Panc1 (cell line): ENCODE measurements at regions of chr22 and their contacts with region 1.

Region 1: DNA sequence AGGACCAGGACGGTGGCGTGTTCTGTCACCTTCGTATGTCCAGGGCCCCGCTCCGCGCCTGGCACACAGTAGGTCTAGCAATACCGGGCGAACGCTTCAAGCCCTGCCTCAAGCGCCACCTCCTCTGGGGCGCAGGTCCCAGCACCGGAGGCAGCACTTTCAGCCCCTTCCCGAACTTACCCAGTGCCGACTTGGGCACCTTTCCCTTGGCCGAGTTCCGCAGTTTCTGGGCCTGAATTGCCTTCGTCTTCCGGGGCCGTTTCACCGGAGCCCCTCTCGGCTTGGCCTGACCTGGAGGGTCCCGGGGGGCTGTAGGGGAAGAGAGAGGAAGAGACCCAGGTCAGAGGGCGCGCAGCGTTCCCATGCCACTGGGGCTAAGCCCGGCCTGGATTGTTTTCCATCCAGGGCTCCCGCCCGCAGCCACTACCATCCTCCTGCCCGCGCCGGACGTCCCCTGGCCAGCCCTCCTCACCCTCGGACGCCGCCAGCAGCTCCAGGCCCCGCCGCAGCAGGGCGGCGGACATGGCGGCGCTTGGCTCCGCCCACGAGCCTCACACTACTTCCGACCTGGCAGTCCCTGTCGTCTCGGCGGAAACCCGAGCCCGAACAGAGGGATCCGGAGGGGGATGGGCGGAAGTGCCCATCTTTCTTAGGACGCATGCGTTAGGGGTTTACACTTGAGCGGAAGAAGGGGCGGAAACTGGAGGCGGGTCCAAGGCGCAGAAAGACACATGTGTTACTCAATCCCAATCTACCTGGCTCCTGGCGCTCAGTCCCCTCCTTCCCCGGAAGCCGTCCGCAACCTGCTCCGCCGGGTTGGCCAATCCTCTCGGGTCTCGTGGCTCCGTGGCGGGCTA is at the start of gene RPS19BP1:
- DNase-seq: peak; percentile 97
- ATAC-seq: peak; percentile 89
- H3K4me3 ChIP-seq: peak within 1 kb of the TSS; percentile 93 to 94
- H3K27ac ChIP-seq: peak within 1 kb of the TSS; percentile 93
- H3K4me1 ChIP-seq: peaks cover 49% of the 10 kb centered on the region
- H3K27me3 ChIP-seq: no peaks in the 10 kb centered on the region
- CTCF ChIP-seq: no peak
- total RNA-seq, gene RPS19BP1: 123 TPM

Region 2: GRCh38 chr22:39152511-39153219 is 379.8 kb before region 1 on chr22 and contains the start of gene CBX7:
- CTCF ChIA-PET with region 1: no interaction called
- POLR2A ChIA-PET with region 1: no interaction called
- in situ Hi-C with region 1: no loop called
- intact Hi-C with region 1: no loop called
- DNase-seq: no peak
- ATAC-seq: peak; percentile 95
- H3K4me3 ChIP-seq: peak within 1 kb of the TSS; percentile 53 to 64
- H3K27ac ChIP-seq: peak within 1 kb of the TSS; percentile 76
- H3K4me1 ChIP-seq: peaks cover 19% of the 10 kb centered on the region
- H3K27me3 ChIP-seq: no peaks in the 10 kb centered on the region
- CTCF ChIP-seq: no peak
- total RNA-seq, gene CBX7: 14.5 TPM

Region 3: DNA sequence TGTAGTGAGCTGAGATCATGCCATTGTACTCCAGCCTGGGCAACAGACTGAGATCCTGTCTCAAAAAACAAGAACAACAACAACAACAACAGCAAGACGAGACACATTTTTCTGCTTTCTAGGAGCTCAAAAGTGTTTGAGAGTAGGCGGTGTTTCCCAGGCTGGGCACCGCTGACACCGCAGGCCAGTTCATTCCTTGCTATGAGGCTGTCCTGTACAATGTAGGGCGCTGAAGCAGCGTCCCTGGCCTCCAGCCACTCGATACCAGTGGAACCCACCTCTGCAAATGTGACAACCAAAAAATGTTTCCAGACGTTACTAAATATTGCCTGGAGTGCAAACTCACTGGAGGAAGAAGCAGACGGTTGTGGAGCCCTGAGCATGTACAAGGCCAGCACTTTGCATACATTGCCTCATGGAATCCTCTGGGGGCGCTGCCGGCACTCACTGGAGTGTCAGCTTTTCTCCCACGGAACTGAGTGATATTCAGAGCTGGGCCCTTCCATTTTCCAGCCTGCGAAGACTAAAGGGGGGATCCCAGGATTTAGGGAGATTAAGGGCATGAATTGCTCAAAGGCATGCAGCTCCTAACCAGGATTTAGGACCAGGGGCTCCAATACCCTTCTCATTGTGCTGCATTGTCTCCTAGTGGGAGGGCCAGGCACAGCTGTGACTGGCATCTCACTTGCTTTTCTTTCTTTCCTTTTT is 36.2 kb before region 1 on chr22:
- CTCF ChIA-PET with region 1: interaction called, 13 read pairs
- POLR2A ChIA-PET with region 1: no interaction called
- in situ Hi-C with region 1: no loop called
- intact Hi-C with region 1: loop called (anchors 5 kb)
- DNase-seq: no peak
- ATAC-seq: peak; percentile 84
- H3K4me3 ChIP-seq: no peak overlapping the region
- H3K27ac ChIP-seq: no peak overlapping the region
- H3K4me1 ChIP-seq: peaks cover 5% of the 10 kb centered on the region
- H3K27me3 ChIP-seq: no peaks in the 10 kb centered on the region
- CTCF ChIP-seq: peak; percentile 85

Region 4: GRCh38 chr22:40036591-40037225 is 504.3 kb after region 1 on chr22:
- CTCF ChIA-PET with region 1: interaction called, 3 read pairs
- POLR2A ChIA-PET with region 1: no interaction called
- in situ Hi-C with region 1: no loop called
- intact Hi-C with region 1: loop called (anchors 5 kb)
- DNase-seq: peak; percentile 52
- ATAC-seq: peak; percentile 96
- H3K4me3 ChIP-seq: no peak overlapping the region
- H3K27ac ChIP-seq: no peak overlapping the region
- H3K4me1 ChIP-seq: no peaks in the 10 kb centered on the region; the same call in 1 of the 2 replicates
- H3K27me3 ChIP-seq: no peaks in the 10 kb centered on the region
- CTCF ChIP-seq: peak; percentile 86